AG04449 (cell line): ENCODE measurements at regions of chr11 and their contacts with region 1.

Region 1: DNA sequence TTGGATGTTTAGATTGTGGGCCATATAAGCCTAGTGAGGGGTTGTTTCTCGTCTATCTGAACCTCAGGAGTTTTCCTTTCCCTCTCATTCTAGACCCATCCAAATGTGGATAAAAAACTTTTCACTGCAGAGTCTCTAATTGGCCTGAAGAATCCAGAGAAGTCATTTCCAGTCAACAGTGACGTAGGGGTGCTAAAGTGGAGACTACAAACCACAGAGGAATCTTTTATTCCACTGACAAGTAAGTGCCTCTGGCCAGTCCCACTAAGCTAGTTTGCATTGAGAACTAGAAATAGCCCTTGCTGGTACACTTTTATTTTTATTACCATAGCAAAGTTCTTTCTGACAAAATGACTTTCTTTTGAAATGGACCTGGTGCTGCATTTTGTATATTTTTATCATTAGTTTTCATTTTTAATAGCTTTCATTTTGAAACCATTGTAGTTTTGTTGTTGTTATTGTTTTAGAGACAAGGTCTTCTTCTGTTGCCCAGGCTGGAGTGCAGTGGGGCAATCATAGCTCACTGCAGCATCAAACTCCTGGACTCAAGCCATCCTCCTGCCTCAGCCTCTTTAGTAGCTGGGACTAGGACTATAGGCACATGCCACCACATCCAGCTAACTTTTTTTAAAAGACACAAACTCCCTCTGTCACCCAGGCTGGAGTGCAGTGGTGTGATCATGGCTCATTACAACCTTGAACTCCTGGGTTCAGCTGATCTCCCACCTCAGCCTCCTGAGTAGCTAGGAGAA is 14.6 kb upstream of the PHLDB1 start:
- DNase-seq: no peak
- H3K4me3 ChIP-seq: no peak overlapping the region
- CTCF ChIP-seq: no peak

Region 2: GRCh38 chr11:118572061-118572980 is 20.5 kb before region 1 on chr11 and contains the start of gene ARCN1:
- CTCF ChIA-PET with region 1: interaction called, 10 read pairs
- POLR2A ChIA-PET with region 1: no interaction called
- DNase-seq: no peak
- H3K4me3 ChIP-seq: peak within 1 kb of the TSS; percentile 97
- CTCF ChIP-seq: no peak

Region 3: GRCh38 chr11:118581057-118581456 is 11.7 kb before region 1 on chr11:
- CTCF ChIA-PET with region 1: interaction called, 33 read pairs
- POLR2A ChIA-PET with region 1: interaction called, 3 read pairs
- DNase-seq: no peak
- H3K4me3 ChIP-seq: no peak overlapping the region
- CTCF ChIP-seq: no peak

Region 4: GRCh38 chr11:118605116-118605867 is 12.5 kb after region 1 on chr11:
- CTCF ChIA-PET with region 1: interaction called, 65 read pairs
- POLR2A ChIA-PET with region 1: interaction called, 6 read pairs
- DNase-seq: peak; percentile 38
- H3K4me3 ChIP-seq: no peak overlapping the region
- CTCF ChIP-seq: no peak

Region 5: GRCh38 chr11:118610804-118611795 is 18.3 kb after region 1 on chr11:
- CTCF ChIA-PET with region 1: interaction called, 65 read pairs
- POLR2A ChIA-PET with region 1: interaction called, 3 read pairs
- DNase-seq: no peak
- H3K4me3 ChIP-seq: peak overlapping the region; percentile 80
- CTCF ChIP-seq: peak; percentile 92